OCI-LY7 (cell line): ENCODE measurements at regions of chr10 and their contacts with region 1.

Region 1: GRCh38 chr10:15088428-15089261 is at the start of gene ACBD7:
- DNase-seq: peak; percentile 91
- H3K4me3 ChIP-seq: peak within 1 kb of the TSS; percentile 73
- H3K27ac ChIP-seq: peak within 1 kb of the TSS; percentile 18
- H3K4me1 ChIP-seq: no peaks in the 10 kb centered on the region
- CTCF ChIP-seq: peak; percentile 31; the same call in 1 of the 2 replicates
- total RNA-seq, gene ACBD7: 26.1 and 26.9 TPM in 2 replicates

Region 2: GRCh38 chr10:15168781-15169554 is 80.3 kb after region 1 on chr10:
- CTCF ChIA-PET with region 1: no interaction called
- POLR2A ChIA-PET with region 1: no interaction called
- intact Hi-C with region 1: loop called (anchors 5 kb)
- DNase-seq: peak; percentile 93
- H3K4me3 ChIP-seq: peak overlapping the region; percentile 51
- H3K27ac ChIP-seq: no peak overlapping the region
- H3K4me1 ChIP-seq: no peaks in the 10 kb centered on the region
- CTCF ChIP-seq: no peak